ENCODE measurements at regions of chr17 and their contacts with region 1.

Region 1: DNA sequence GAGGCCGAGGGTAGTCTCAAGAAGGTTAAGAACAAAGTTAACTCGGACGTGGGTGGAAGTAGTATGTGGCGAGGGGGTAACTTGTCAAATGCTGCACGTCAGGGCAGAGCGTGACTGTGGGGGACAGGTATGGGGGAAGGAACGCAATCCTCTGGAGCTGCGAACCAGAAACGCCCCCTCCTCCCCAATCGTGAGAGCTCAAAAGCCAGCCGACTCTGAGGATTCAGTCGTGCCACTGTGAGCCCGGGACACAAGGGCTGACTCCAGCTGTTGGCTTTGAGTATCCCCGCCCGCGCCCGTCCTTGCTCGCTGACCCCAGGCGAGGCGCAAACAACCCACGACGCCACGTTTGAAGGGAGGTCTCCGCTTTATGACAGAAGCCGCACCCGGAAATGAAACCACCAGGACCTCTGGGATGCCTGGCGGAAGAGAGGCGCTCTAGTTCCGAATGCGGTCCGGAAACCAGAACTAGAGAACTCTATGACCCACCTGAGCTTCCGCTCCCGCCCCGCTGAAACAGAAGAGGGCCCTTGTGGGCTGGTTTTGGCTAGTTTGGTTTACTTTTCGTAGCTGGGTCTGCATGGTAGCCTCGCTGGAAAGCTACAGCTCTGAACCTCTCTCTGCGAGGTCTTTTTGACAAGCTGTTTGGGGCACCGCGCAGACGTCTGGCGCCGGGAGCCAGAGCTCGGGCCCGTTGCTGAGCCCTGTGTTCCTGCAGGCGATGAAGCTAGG is at the start of gene PEX12:
- DNase-seq: peak; percentile 71
- ATAC-seq: peak; percentile 95
- H3K4me3 Mint-ChIP-seq: peak within 1 kb of the TSS; percentile 96
- H3K27ac Mint-ChIP-seq: peak within 1 kb of the TSS; percentile 98
- H3K4me1 Mint-ChIP-seq: peaks cover 26% of the 10 kb centered on the region
- H3K27me3 Mint-ChIP-seq: no peaks in the 10 kb centered on the region
- CTCF ChIP-seq: no peak
- total RNA-seq, gene PEX12: 4.1 and 4.8 TPM in 2 replicates

Region 2: DNA sequence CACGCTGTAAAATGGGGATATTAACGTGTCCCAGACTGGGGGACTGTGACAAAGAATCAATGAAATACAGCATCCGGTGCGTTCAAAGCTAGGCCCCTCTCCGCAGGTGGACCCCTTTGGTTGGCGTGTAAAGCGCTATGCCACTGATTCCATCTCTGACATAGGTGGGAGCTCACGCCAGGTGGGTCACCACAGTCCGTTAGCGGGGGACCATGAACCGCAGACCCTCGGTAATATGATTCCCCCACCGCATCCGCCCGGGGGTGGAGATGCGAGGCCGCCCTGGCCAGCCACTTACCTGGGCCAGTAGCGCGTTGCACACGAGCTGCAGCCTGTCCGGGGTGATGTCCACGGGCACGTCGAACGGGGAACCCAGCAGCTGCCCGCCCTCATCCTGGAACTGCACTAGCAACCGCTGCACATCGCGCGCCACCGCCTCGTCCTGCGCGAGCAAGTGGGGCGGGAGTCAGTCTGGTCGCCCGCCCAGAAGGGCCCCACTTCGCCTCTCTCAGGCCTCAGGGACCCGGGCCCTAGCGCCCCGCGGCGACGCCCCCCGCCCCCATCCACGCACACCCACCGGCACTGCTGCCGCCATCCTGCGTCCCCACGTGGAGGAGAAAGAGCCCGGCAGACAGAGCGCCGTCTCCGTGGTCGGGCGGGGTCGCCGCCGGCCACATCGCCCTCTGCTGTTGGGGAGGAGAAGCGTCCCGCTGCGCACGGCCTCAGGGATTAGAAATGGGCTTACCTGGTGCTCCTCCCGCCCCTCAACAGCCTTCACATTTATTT is 436.5 kb before region 1 on chr17 and contains the start of gene NLE1:
- CTCF ChIA-PET with region 1: no interaction called
- POLR2A ChIA-PET with region 1: interaction called, 3 read pairs
- intact Hi-C with region 1: loop called (anchors 5 kb)
- DNase-seq: peak; percentile 87
- ATAC-seq: peak; percentile 99
- H3K4me3 Mint-ChIP-seq: peak within 1 kb of the TSS; percentile 87
- H3K27ac Mint-ChIP-seq: peak within 1 kb of the TSS; percentile 59
- H3K4me1 Mint-ChIP-seq: peaks cover 14% of the 10 kb centered on the region
- H3K27me3 Mint-ChIP-seq: peaks cover 1% of the 10 kb centered on the region
- CTCF ChIP-seq: no peak
- total RNA-seq, gene NLE1: 22.1 and 26.3 TPM in 2 replicates

Region 3: GRCh38 chr17:35514564-35514963 is 63.8 kb before region 1 on chr17:
- CTCF ChIA-PET with region 1: no interaction called
- POLR2A ChIA-PET with region 1: no interaction called
- intact Hi-C with region 1: no loop called
- DNase-seq: no peak
- ATAC-seq: no peak
- H3K4me3 Mint-ChIP-seq: no peak overlapping the region
- H3K27ac Mint-ChIP-seq: no peak overlapping the region
- H3K4me1 Mint-ChIP-seq: no peaks in the 10 kb centered on the region
- H3K27me3 Mint-ChIP-seq: peaks cover 47% of the 10 kb centered on the region
- CTCF ChIP-seq: no peak